ENCODE measurements at regions of chr4 and their contacts with region 1.

Region 1: GRCh38 chr4:53507671-53508286 is 83.5 kb downstream of the LNX1 start:
- DNase-seq: peak in 4 of 7 donors; percentile 23 to 59 (median 40)
- H3K4me3 ChIP-seq: no peak overlapping the region
- H3K27ac ChIP-seq: peak overlapping the region in 3 of 5 donors; percentile 31 to 52 (median 34)
- H3K4me1 ChIP-seq: peaks cover 0 to 9% of the 10 kb centered on the region in 2 donors
- H3K27me3 ChIP-seq: no peaks in the 10 kb centered on the region
- CTCF ChIP-seq: no peak
- POLR2A ChIP-seq: no peak

Region 2: DNA sequence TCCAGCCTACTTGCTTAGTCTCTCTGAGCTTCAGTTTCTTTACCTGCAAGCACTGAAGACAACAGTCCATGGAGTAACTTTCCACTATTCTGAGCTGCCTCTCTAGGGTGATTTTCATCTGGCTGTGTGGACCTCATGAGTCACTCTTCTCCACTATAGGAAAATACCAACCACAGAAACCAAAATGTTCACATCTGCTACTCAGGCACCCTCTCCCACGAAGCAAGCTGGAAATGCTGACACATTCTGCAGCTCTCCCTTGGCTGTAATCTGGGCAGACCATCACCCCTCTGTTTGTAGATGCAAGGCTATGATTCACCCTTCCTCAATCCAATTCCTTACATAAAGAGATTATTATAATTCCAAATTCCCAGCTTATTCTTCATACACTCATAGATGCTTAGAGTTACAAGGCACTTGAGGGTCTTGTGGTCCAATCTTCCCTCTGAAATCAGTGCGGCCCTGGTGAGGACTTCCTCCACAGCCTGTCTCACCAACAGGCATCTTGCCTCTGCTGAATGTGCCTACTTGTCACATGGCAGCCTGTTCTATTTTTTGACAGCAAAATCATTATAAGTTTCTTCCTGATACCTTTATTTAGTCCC is 180.5 kb after region 1 on chr4:
- intact Hi-C with region 1: loop called in 1 of 2 experiments (anchors 10 kb)
- DNase-seq: peak in 3 of 7 donors; percentile 20 to 37 (median 25)
- H3K4me3 ChIP-seq: no peak overlapping the region
- H3K27ac ChIP-seq: peak overlapping the region in 1 of 5 donors; percentile 42
- H3K4me1 ChIP-seq: no peaks in the 10 kb centered on the region
- H3K27me3 ChIP-seq: peaks cover 4% of the 10 kb centered on the region
- CTCF ChIP-seq: no peak
- POLR2A ChIP-seq: no peak